ENCODE measurements at regions of chr3 and their contacts with region 1.

Region 1: DNA sequence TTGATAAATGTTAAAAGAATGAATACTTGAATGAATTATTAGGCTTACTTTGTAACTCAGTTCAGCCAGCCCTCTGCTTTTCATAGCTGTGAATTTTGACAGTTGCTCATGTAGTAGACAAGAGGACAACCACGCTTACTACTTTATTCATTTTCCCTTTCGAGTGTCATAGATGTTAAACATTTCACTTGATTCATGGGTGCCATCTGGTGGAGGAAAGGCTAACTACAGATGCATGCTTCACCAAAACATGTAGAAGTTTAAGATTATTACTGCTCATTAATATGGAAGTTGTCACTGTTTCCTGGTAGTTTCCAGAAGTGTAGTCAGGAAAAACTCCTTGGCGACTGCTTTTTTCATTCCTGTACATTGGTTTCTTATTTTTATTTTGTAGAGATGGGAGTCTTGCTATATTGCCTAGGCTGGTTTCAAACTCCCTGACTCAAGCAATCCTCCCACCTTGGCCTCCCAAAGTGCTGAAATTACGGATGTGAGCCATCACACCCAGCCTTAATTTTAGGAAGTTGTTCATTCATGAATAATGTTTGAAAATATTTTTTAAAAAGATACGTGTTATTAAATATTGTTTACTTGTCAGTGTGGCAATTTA is 163.2 kb downstream of the B3GALNT1 start:
- DNase-seq: peak in 1 of 3 donors; percentile 69
- ATAC-seq: peak; percentile 95 to 99 (median 97)
- H3K4me3 ChIP-seq: no peak overlapping the region
- H3K27ac ChIP-seq: peak overlapping the region in 2 of 3 donors; percentile 38 to 68
- H3K4me1 ChIP-seq: peaks cover 0 to 12% (median 5%) of the 10 kb centered on the region in 4 donors
- H3K27me3 ChIP-seq: no peaks in the 10 kb centered on the region
- CTCF ChIP-seq: peak; percentile 85 to 93 (median 87)
- POLR2A ChIP-seq: no peak

Region 2: GRCh38 chr3:160707187-160707794 is 234.7 kb before region 1 on chr3:
- intact Hi-C with region 1: loop called in 1 of 2 experiments (anchors 10 kb)
- DNase-seq: peak in 1 of 3 donors; percentile 47
- ATAC-seq: peak; percentile 86 to 96 (median 90)
- H3K4me3 ChIP-seq: no peak overlapping the region
- H3K27ac ChIP-seq: no peak overlapping the region
- H3K4me1 ChIP-seq: peaks cover 0 to 5% (median 2%) of the 10 kb centered on the region in 4 donors
- H3K27me3 ChIP-seq: no peaks in the 10 kb centered on the region
- CTCF ChIP-seq: peak; percentile 62 to 70 (median 63)
- POLR2A ChIP-seq: no peak

Region 3: GRCh38 chr3:160904691-160905090 is 37.3 kb before region 1 on chr3:
- intact Hi-C with region 1: no loop called
- DNase-seq: no peak
- ATAC-seq: no peak
- H3K4me3 ChIP-seq: no peak overlapping the region
- H3K27ac ChIP-seq: no peak overlapping the region
- H3K4me1 ChIP-seq: no peaks in the 10 kb centered on the region
- H3K27me3 ChIP-seq: no peaks in the 10 kb centered on the region
- CTCF ChIP-seq: no peak
- POLR2A ChIP-seq: no peak

Region 4: GRCh38 chr3:161050935-161051334 is 108.9 kb after region 1 on chr3:
- intact Hi-C with region 1: no loop called
- DNase-seq: no peak
- ATAC-seq: peak in 1 of 4 donors; percentile 30
- H3K4me3 ChIP-seq: no peak overlapping the region
- H3K27ac ChIP-seq: no peak overlapping the region
- H3K4me1 ChIP-seq: no peaks in the 10 kb centered on the region
- H3K27me3 ChIP-seq: no peaks in the 10 kb centered on the region
- CTCF ChIP-seq: no peak
- POLR2A ChIP-seq: no peak

Region 5: DNA sequence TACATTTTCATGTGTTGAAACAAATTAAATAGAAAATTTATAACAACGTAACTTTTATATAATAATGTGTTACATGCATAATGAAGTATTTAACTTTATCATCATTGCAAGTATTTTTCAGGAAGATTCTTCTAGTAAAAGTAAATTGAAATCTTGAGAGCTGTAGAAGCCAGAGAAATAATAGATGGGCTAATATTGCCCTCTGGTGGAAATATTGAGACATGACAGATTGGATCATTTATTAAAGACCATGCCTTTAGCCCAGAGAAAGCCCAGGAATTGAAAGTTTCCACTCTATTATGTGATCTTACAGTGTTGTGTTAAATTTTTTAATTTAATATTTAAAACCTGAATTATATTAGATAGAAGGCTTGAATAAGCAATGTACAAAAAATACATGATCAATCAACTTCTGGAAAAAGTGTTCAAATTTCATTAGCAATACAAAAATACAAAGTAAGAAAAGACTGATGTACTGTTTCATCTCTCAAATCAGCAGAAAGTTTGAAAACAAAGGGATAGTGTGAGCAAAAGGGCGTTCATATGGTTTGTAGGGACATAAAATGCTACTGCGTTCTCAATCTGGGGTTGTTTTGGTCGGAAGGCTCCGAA is 482.0 kb after region 1 on chr3:
- intact Hi-C with region 1: no loop called
- DNase-seq: no peak
- ATAC-seq: peak; percentile 66 to 71 (median 68)
- H3K4me3 ChIP-seq: no peak overlapping the region
- H3K27ac ChIP-seq: no peak overlapping the region
- H3K4me1 ChIP-seq: peaks cover 0 to 12% (median 3%) of the 10 kb centered on the region in 4 donors
- H3K27me3 ChIP-seq: no peaks in the 10 kb centered on the region
- CTCF ChIP-seq: peak; percentile 72 to 90 (median 76)
- POLR2A ChIP-seq: no peak